ENCODE measurements at regions of chr1 and their contacts with region 1.

Region 1: DNA sequence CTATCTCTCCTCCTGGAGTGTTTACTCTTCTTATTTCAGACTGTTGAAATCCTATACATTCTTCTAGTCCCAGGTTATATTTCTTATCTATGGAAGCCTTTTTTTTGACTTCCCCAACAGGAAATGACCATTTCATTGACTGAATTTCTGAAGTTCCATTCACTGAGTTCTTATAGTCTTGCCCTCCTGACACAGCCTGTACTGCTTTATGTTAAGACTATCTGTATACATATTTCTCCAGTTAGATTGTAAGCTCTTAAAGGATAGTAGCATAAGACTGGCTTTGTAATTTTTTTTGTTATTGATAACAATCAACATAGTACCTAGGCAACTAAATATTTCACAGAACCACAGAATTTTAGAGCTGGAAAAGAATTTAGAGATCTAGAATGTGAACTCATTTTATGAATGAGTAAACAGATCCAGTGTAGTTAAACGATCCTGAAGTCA is 14.9 kb upstream of the MACF1 start:
- DNase-seq: no peak
- H3K4me3 ChIP-seq: no peak overlapping the region
- H3K27ac ChIP-seq: peak overlapping the region; percentile 18 to 86 (median 42)
- H3K4me1 ChIP-seq: peaks cover 11 to 52% (median 23%) of the 10 kb centered on the region in 4 donors
- H3K27me3 ChIP-seq: no peaks in the 10 kb centered on the region
- CTCF ChIP-seq: no peak
- EP300 ChIP-seq: no peak
- POLR2A ChIP-seq: no peak

Region 2: DNA sequence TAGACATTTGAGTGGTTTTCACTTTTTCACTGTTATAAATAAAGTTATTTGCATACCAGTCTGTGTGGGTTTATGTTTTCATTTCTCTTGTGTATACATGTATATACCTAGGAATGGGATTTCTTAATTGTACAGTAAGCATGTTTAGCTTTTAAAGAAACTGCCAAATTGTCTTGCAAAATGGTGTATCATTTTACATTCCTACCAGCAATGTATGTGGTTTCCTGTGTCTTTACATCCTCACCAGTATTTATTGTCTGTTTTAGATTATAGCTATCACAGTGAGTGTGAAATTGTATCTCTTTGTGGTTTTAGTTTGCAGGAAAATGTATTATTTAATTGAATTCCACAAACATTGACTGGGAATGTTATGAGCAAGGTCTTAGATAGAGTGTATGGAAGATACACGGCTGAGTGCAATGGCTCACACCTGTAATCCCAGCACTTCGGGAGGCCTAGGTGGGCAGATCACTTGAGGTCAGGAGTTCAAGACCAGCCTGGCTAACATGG is 72.2 kb after region 1 on chr1:
- in situ Hi-C with region 1: loop called in 2 of 4 experiments (anchors 10 kb)
- intact Hi-C with region 1: loop called (anchors 5 kb)
- DNase-seq: no peak
- H3K4me3 ChIP-seq: no peak overlapping the region
- H3K27ac ChIP-seq: peak overlapping the region in 2 of 4 donors; percentile 41 to 47
- H3K4me1 ChIP-seq: peaks cover 0 to 16% (median 2%) of the 10 kb centered on the region in 4 donors
- H3K27me3 ChIP-seq: no peaks in the 10 kb centered on the region
- CTCF ChIP-seq: no peak
- EP300 ChIP-seq: no peak
- POLR2A ChIP-seq: no peak